ENCODE measurements at regions of chr14 and their contacts with region 1.

Region 1: DNA sequence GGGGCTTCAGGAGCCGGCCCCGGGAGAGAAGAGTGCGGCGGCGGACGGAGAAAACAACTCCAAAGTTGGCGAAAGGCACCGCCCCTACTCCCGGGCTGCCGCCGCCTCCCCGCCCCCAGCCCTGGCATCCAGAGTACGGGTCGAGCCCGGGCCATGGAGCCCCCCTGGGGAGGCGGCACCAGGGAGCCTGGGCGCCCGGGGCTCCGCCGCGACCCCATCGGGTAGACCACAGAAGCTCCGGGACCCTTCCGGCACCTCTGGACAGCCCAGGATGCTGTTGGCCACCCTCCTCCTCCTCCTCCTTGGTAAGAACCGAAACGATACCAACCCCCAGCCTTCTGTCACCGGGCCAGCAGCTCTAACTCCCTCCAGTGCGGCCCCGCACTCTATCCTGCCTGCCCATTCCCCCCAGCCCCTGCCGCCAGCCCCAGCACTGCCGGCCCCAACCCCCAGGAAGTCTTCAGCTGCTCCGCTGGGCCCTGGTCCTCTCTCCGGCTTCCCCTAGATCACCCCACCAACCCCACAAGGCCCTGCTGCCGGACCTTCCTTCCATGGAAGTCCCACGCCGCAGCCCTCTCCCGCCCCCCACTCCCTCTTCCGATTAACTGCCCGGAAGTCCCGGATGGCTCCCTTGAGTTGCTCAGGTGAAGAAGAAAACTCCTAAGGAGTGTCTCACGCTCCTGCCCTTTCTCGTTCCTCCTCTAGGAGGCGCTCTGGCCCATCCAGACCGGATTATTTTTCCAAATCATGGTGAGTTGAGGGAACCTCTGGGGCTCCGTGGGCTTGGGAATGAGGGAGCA is 693 bp downstream of the LRP10 start:
- DNase-seq: peak; percentile 49 to 81 (median 69)
- ATAC-seq: peak; percentile 46 to 49
- H3K4me3 Mint-ChIP-seq: peak overlapping the region; percentile 90 to 99 (median 94)
- H3K27ac Mint-ChIP-seq: peak overlapping the region; percentile 82 to 99 (median 98)
- H3K4me1 Mint-ChIP-seq: peaks cover 9 to 39% (median 31%) of the 10 kb centered on the region in 4 donors
- H3K27me3 Mint-ChIP-seq: no peaks in the 10 kb centered on the region

Region 2: GRCh38 chr14:22766456-22767322 is 105.5 kb before region 1 on chr14 and contains the start of gene OXA1L:
- POLR2A ChIA-PET with region 1: interaction called, 11 read pairs
- DNase-seq: peak; percentile 84 to 99 (median 96)
- ATAC-seq: peak; percentile 92 to 93
- H3K4me3 Mint-ChIP-seq: peak within 1 kb of the TSS; percentile 86 to 97 (median 91)
- H3K27ac Mint-ChIP-seq: peak within 1 kb of the TSS; percentile 94 to 98 (median 98)
- H3K4me1 Mint-ChIP-seq: peaks cover 21 to 36% (median 33%) of the 10 kb centered on the region in 4 donors
- H3K27me3 Mint-ChIP-seq: no peaks in the 10 kb centered on the region
- polyA plus RNA-seq, gene OXA1L: 56.3 to 67.4 (median 57.1) TPM

Region 3: DNA sequence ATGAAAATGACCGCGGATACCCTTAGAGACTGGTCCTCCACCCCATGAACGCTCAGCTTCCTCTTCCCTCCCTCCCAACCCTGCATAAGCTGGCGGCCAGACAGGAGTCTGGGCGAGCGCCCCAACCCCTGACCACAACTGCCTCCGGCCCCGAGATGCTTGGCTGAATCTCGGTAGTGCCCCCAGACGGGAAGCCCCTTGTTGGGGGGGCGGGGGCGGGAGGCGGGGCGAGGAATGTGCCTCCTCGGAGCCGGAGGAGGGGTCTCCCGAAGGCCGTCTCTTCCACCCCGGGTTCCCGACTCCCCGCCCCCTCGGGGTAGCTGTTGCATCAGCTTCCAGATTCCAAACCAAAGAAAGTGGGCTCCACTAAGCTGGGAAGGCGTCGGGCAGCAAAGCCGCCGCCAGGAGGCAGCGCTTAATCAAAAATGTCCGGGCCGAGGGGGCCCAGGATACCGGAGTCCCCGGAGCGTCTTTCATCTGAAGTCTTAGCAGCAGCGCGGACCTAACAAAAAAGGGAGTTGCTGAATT is 49.6 kb before region 1 on chr14:
- POLR2A ChIA-PET with region 1: interaction called, 14 read pairs
- DNase-seq: peak; percentile 56 to 85 (median 67)
- ATAC-seq: peak; percentile 92 to 93
- H3K4me3 Mint-ChIP-seq: peak overlapping the region; percentile 36 to 82 (median 69)
- H3K27ac Mint-ChIP-seq: peak overlapping the region in 4 of 10 donors; percentile 26 to 66 (median 62)
- H3K4me1 Mint-ChIP-seq: peaks cover 17 to 48% (median 22%) of the 10 kb centered on the region in 4 donors
- H3K27me3 Mint-ChIP-seq: peaks cover 6 to 16% (median 11%) of the 10 kb centered on the region in 5 donors

Region 4: DNA sequence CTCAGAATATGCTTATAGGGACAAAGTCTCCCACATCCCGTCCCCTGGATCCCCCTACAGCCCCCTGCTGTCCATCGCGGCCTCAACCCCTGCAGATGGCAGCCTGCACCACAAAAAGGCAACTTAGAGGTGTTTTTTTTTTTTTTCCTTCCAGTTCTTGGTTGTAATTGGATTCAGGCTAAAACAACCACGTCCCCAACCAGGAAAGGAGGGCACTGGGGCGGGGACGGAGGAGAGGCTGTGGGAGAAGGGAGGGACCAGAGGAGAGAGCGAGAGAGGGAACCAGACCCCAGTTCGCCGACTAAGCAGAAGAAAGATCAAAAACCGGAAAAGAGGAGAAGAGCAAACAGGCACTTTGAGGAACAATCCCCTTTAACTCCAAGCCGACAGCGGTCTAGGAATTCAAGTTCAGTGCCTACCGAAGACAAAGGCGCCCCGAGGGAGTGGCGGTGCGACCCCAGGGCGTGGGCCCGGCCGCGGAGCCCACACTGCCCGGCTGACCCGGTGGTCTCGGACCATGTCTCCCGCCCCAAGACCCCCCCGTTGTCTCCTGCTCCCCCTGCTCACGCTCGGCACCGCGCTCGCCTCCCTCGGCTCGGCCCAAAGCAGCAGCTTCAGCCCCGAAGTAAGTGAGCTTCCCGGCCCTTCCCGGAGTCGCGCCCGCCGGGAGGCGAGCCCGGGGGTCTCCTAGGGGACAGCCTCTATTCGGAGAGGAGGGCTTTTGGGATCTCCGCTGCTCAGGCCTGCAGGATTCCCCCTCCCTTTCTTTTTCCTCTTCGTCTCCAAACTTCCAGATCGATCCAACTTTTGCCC is 35.7 kb before region 1 on chr14 and contains the start of gene MMP14:
- POLR2A ChIA-PET with region 1: no interaction called
- DNase-seq: no peak
- ATAC-seq: peak; percentile 30 to 39
- H3K4me3 Mint-ChIP-seq: peak within 1 kb of the TSS; percentile 86 to 98 (median 92)
- H3K27ac Mint-ChIP-seq: peak within 1 kb of the TSS; percentile 20 to 94 (median 88)
- H3K4me1 Mint-ChIP-seq: peaks cover 12 to 48% (median 22%) of the 10 kb centered on the region in 4 donors
- H3K27me3 Mint-ChIP-seq: peaks cover 0 to 26% (median 5%) of the 10 kb centered on the region in 5 donors
- polyA plus RNA-seq, gene MMP14: not detected

Region 5: DNA sequence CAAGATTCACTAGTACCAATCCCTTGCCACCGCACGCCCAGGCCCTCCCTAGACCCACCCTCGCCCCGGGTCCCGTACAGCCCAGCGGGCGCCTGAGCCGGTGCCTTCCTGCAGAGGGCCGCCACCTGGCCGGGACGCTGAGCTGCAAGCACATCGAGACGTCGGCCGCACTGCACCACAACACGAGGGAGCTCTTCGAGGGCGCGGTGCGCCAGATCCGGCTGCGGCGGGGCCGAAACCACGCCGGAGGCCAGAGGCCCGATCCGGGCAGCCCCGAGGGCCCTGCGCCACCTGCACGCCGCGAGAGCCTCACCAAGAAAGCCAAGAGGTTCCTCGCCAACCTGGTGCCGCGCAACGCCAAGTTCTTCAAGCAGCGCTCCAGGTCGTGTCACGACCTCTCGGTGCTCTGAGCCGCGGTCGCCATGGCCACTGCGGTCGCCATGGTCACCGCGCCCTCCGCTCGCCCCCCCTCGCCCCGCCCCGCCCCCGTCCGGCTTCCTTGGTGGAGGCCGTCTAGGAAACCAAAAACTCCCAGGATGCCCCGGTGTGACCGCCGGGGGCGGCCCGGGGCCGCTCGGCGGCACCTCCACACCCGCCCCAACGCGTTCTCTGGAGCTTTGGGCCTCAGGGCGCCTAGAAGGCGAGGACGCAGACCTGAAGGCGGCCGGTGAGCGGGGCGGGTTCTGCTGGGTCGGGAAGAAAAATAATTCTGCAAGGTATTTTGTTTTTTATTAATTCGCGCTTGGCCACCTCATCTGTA is 14.4 kb after region 1 on chr14:
- POLR2A ChIA-PET with region 1: interaction called, 118 read pairs
- DNase-seq: peak; percentile 53 to 85 (median 65)
- ATAC-seq: peak; percentile 76 to 80
- H3K4me3 Mint-ChIP-seq: peak overlapping the region; percentile 82 to 94 (median 90)
- H3K27ac Mint-ChIP-seq: peak overlapping the region; percentile 90 to 95 (median 92)
- H3K4me1 Mint-ChIP-seq: peaks cover 35 to 67% (median 66%) of the 10 kb centered on the region in 4 donors
- H3K27me3 Mint-ChIP-seq: no peaks in the 10 kb centered on the region

Region 6: GRCh38 chr14:22892488-22892887 is 20.3 kb after region 1 on chr14:
- POLR2A ChIA-PET with region 1: interaction called, 118 read pairs
- DNase-seq: no peak
- ATAC-seq: no peak
- H3K4me3 Mint-ChIP-seq: no peak overlapping the region
- H3K27ac Mint-ChIP-seq: peak overlapping the region in 2 of 10 donors; percentile 24 to 41
- H3K4me1 Mint-ChIP-seq: peaks cover 21 to 31% (median 23%) of the 10 kb centered on the region in 4 donors
- H3K27me3 Mint-ChIP-seq: no peaks in the 10 kb centered on the region

Region 7: DNA sequence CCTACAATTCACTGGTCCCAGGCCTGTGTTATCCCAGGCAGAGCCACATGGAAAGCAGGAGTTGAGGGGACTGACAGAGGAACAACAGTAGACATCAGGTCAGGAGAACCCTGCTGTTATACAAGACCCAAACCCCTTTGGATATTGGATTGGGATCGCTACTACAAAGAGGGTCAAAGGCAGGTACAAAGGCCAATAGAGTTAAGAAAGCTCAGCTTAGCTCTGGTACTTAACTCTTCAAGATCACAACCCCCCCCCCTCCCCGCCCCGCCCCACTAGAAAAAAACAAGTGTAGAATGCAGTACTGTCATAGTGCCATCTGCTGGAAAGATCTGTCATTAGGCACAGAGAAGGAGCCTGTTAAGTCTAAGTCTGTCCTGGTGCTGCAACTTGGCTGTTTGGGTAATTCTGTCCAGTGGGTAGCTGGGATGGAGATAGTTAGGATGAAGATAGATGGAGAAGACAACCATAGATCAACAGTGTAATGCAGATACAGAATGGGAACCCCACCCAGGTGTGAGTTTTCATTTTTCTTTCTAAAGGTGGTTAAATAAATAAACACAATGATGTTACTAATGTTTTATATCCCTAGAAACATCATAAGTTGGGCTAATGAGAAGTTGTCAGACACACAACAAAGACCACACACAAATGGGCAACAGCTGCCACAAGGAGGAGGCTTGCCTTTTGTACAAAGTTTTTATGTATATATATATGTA is 28.0 kb after region 1 on chr14:
- POLR2A ChIA-PET with region 1: interaction called, 13 read pairs
- DNase-seq: peak in 9 of 10 donors; percentile 14 to 70 (median 41)
- ATAC-seq: peak; percentile 81 to 82
- H3K4me3 Mint-ChIP-seq: no peak overlapping the region
- H3K27ac Mint-ChIP-seq: peak overlapping the region in 5 of 10 donors; percentile 26 to 73 (median 38)
- H3K4me1 Mint-ChIP-seq: peaks cover 6 to 11% (median 6%) of the 10 kb centered on the region in 4 donors
- H3K27me3 Mint-ChIP-seq: no peaks in the 10 kb centered on the region

Region 8: GRCh38 chr14:22918804-22919600 is 46.8 kb after region 1 on chr14 and contains the start of gene RBM23:
- POLR2A ChIA-PET with region 1: interaction called, 22 read pairs
- DNase-seq: peak; percentile 97 to 100 (median 100)
- ATAC-seq: peak; percentile 88 to 89
- H3K4me3 Mint-ChIP-seq: peak within 1 kb of the TSS; percentile 90 to 100 (median 98)
- H3K27ac Mint-ChIP-seq: peak within 1 kb of the TSS; percentile 100
- H3K4me1 Mint-ChIP-seq: peaks cover 13 to 55% (median 38%) of the 10 kb centered on the region in 4 donors
- H3K27me3 Mint-ChIP-seq: peaks cover 0 to 5% (median 0%) of the 10 kb centered on the region in 5 donors
- polyA plus RNA-seq, gene RBM23: 42.2 to 62.8 (median 59.6) TPM

Measured in naive thymus-derived CD8-positive, alpha-beta T cell (primary cell).